Activated CD4-positive, alpha-beta T cell treated with anti-CD3 and anti-CD28 coated beads, Interleukin-2, amount 10 ng/mL, durations not matched to agents 24 days and 14 days (primary cell): ENCODE measurements at regions of chr5 and their contacts with region 1.

Region 1: DNA sequence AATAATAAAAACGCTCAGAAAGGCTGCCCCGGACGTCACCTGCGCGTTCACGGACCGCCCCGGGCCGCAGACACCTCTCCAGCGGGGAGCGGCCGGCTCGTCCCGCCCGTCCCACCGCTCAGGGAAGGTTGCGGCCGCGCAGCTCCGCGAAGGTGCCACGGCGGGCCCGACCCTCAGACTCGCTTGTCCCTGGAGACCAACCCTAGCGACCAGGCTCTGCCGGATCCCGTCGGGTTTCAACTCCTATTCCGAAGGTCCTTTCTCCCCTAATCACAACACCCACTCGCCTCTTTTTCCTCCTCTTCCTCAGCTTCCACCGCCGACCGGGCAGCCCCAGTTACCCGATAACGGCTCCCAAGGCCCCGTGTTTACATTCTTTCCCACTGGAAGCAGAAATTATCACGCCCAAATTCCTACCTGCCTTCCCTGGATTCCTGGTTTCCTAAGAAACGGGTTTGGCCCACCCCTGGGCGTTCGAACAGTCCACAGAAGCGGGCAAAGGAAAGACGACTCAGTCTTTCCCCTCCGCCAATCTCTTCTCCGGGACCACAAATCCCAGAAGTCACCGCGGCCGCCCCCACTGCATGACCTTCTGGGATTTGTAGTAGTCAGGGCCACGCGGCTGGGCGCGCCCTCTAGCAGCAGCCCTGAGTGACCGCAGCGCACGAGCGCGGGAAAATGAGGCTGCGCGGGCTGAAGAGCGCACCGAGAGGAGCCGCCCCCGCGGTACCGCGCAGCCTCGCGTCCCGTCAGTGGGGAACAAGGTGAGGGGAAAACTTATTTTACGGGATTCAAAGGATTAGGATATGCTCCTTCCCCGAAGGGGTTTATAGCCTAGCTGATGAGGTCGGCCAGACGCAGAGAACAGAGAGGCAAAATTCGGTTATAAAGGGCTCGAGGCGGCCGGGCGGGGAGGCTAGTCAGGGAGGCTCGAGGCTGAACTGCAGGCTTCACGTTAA is at the start of gene TTC33:
- DNase-seq: peak; percentile 98
- H3K4me3 Mint-ChIP-seq: no peak within 1 kb of the TSS
- H3K27ac Mint-ChIP-seq: no peak within 1 kb of the TSS
- H3K4me1 Mint-ChIP-seq: peaks cover 15% of the 10 kb centered on the region
- H3K27me3 Mint-ChIP-seq: no peaks in the 10 kb centered on the region
- total RNA-seq, gene TTC33: 22.7 and 23.1 TPM in 2 replicates

Region 2: DNA sequence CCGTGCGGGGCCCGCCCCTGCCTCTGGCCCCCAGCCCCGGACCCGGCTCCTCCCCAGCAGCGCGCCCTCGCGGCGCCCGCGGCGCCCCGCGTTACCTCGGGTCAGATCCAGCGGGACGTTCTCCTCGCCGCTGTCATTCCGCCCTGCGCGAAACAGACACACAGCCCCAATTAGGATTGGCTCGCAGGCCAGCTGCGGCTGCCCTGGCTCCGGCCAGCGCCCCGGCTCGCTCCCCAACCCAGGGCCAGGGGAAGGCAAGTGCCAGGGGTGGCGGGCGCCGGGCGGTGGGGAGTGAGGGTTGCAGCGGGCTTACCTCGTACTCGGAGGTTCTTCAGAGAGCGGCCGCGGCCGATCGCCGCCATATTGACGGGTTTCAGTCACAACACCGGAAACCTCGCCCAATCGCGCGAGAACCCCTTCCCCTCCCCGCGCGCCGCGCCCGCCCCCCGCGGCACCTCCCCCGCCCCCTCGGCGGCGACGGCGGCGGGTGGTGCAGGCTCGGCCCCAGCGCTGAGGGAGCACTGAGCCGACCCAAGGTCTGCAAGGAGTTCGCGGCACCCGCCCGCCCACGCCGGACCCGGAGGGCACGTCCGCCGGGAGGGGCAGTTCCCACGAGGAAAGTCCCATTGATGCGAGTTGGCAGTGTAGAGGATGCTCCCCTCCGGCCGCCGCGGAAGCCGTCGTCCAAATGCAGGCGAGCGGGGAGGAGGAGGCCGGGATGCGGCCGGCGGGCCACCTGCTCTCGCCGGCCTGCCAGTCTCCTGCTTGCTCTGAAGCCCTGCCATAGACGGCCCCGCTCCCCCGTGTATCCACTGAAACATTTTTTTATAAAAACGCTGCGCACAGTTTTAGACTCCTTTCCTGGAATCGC is 1681.4 kb before region 1 on chr5 and contains the start of gene RICTOR:
- intact Hi-C with region 1: loop called (anchors 10 kb)
- DNase-seq: peak; percentile 97
- H3K4me3 Mint-ChIP-seq: peak within 1 kb of the TSS; percentile 98
- H3K27ac Mint-ChIP-seq: peak within 1 kb of the TSS; percentile 98
- H3K4me1 Mint-ChIP-seq: peaks cover 36% of the 10 kb centered on the region
- H3K27me3 Mint-ChIP-seq: peaks cover 8% of the 10 kb centered on the region
- total RNA-seq, gene RICTOR: 31.1 and 34.2 TPM in 2 replicates

Region 3: DNA sequence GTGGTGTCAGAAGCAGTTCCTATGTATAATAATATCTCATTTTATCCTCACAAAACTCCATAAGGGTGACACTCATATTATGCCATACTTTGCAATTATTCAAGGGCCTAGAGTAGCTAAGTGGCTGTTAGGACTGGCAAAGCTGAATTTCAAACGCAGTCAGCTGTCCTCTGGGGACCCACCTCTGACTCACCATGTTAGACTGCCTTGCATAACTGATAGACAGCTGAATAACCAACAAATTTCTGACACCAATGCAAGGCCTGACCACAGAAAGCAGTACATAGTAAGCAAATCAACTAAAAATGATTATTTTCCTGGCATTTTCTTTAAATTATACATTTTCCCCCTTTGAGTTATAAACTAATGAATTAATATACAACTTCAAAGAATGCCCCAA is 327.6 kb before region 1 on chr5:
- intact Hi-C with region 1: no loop called
- DNase-seq: no peak
- H3K4me3 Mint-ChIP-seq: no peak overlapping the region
- H3K27ac Mint-ChIP-seq: no peak overlapping the region
- H3K4me1 Mint-ChIP-seq: peaks cover 37% of the 10 kb centered on the region
- H3K27me3 Mint-ChIP-seq: no peaks in the 10 kb centered on the region

Region 4: DNA sequence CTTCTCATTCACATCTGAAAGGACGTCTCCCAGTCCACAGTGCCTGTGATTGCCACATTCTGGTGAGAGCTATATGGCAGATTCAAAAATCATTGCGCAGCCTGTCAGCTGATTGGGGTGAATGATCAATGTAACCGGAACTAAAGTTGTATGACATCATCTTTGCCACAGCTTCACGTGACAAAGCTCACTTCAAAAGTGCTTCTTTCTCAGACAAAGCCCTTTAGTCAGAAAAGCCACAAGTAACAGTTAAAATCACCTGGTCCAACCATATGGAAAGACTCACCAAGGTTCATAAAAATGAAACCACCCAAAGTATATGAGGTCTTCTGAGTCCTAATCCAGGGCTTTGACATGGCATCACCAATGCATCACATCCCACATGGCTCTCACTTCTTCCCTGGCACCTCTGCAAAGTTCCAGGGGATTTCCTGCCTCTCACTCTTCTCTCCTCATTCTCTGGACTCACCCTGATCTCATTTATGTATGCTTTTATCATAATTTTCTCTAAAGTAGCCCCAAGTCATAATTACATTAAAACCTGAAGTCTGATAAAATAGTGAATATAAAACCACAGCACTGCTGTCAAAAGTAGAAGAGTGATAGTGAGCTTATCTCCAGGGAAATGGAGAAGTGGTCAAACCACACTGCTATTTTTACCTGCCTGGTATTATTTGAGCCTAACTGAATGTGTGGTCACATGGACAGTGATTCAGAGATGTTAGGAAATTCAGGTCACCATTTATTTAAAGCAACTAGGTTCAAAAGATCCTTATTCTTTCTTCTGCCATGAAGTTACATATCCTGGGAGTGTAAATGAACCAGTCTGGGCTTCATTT is 269.0 kb before region 1 on chr5:
- intact Hi-C with region 1: loop called (anchors 1 kb)
- DNase-seq: peak; percentile 89
- H3K4me3 Mint-ChIP-seq: peak overlapping the region; percentile 45
- H3K27ac Mint-ChIP-seq: peak overlapping the region; percentile 89
- H3K4me1 Mint-ChIP-seq: peaks cover 55% of the 10 kb centered on the region
- H3K27me3 Mint-ChIP-seq: no peaks in the 10 kb centered on the region

Region 5: GRCh38 chr5:40798012-40798855 is 42.5 kb after region 1 on chr5 and contains the start of gene PRKAA1:
- intact Hi-C with region 1: loop called (anchors 1 kb)
- DNase-seq: peak; percentile 97
- H3K4me3 Mint-ChIP-seq: peak within 1 kb of the TSS; percentile 88
- H3K27ac Mint-ChIP-seq: peak within 1 kb of the TSS; percentile 97
- H3K4me1 Mint-ChIP-seq: peaks cover 36% of the 10 kb centered on the region
- H3K27me3 Mint-ChIP-seq: peaks cover 15% of the 10 kb centered on the region
- total RNA-seq, gene PRKAA1: 44.8 and 49.1 TPM in 2 replicates

Region 6: GRCh38 chr5:40879163-40879942 is 123.7 kb after region 1 on chr5:
- intact Hi-C with region 1: loop called (anchors 1 kb)
- DNase-seq: no peak
- H3K4me3 Mint-ChIP-seq: no peak overlapping the region
- H3K27ac Mint-ChIP-seq: no peak overlapping the region
- H3K4me1 Mint-ChIP-seq: peaks cover 3% of the 10 kb centered on the region
- H3K27me3 Mint-ChIP-seq: peaks cover 13% of the 10 kb centered on the region

Region 7: GRCh38 chr5:41270423-41271251 is 515.0 kb after region 1 on chr5:
- intact Hi-C with region 1: no loop called
- DNase-seq: no peak
- H3K4me3 Mint-ChIP-seq: no peak overlapping the region
- H3K27ac Mint-ChIP-seq: no peak overlapping the region
- H3K4me1 Mint-ChIP-seq: no peaks in the 10 kb centered on the region
- H3K27me3 Mint-ChIP-seq: no peaks in the 10 kb centered on the region